Caco-2 (cell line): ENCODE measurements at regions of chr10 and their contacts with region 1.

Region 1: GRCh38 chr10:44569193-44570091 is 184.5 kb upstream of the CXCL12 start:
- DNase-seq: no peak
- H3K4me3 ChIP-seq: no peak overlapping the region
- H3K4me3 Mint-ChIP-seq: no peak overlapping the region
- H3K27ac Mint-ChIP-seq: no peak overlapping the region
- H3K4me1 ChIP-seq: no peaks in the 10 kb centered on the region
- H3K4me1 Mint-ChIP-seq: no peaks in the 10 kb centered on the region
- H3K27me3 ChIP-seq: no peaks in the 10 kb centered on the region
- H3K27me3 Mint-ChIP-seq: peaks cover 7% of the 10 kb centered on the region
- CTCF ChIP-seq: no peak

Region 2: GRCh38 chr10:44703241-44704155 is 134.1 kb after region 1 on chr10:
- CTCF ChIA-PET with region 1: no interaction called
- POLR2A ChIA-PET with region 1: no interaction called
- intact Hi-C with region 1: no loop called
- DNase-seq: no peak
- H3K4me3 ChIP-seq: no peak overlapping the region
- H3K4me3 Mint-ChIP-seq: no peak overlapping the region
- H3K27ac Mint-ChIP-seq: no peak overlapping the region
- H3K4me1 ChIP-seq: peaks cover 6% of the 10 kb centered on the region; the same call in 1 of the 2 replicates
- H3K4me1 Mint-ChIP-seq: peaks cover 13% of the 10 kb centered on the region
- H3K27me3 ChIP-seq: no peaks in the 10 kb centered on the region; the same call in 1 of the 2 replicates
- H3K27me3 Mint-ChIP-seq: peaks cover 10% of the 10 kb centered on the region
- CTCF ChIP-seq: no peak

Region 3: DNA sequence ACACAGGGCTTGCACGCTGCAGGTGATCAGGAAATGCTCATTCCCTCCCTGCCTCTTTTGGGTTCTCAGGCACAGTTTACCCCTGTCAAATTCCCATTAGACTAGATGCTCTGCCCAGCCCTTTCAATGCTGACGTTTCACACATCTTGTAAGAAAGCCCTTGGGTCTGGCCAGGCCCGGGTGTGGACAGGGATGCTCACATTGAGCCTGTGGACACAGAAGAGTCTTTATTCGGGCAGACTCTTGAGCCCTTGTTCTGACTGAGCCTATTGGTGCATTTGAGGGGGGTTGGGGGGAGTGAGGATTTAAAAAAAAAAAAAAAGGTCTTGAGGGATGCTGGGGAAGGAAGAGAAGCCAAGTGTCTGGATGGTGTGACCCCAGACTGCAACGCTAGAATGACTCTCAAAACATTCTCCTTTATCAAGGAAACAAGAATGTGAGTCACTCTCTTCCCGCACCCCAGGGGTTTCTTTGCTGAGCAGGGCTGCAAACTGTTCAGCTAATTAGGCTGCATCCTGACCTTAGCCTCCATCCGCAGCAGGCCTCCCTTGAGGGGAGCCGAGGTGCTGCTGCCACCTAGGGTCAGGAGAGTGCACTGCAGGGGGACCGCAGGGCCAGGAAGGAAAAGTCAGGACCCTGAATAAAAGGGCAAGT is 288.0 kb after region 1 on chr10:
- CTCF ChIA-PET with region 1: no interaction called
- POLR2A ChIA-PET with region 1: no interaction called
- intact Hi-C with region 1: loop called (anchors 10 kb)
- DNase-seq: peak in 1 of 2 experiments; percentile 78
- H3K4me3 ChIP-seq: no peak overlapping the region
- H3K4me3 Mint-ChIP-seq: no peak overlapping the region
- H3K27ac Mint-ChIP-seq: no peak overlapping the region
- H3K4me1 ChIP-seq: no peaks in the 10 kb centered on the region
- H3K4me1 Mint-ChIP-seq: no peaks in the 10 kb centered on the region
- H3K27me3 ChIP-seq: 0 out of 2 replicates have a peak, but pooled peaks cover 2% of the 10 kb centered on the region
- H3K27me3 Mint-ChIP-seq: peaks cover 8% of the 10 kb centered on the region
- CTCF ChIP-seq: peak; percentile 99